HEK293 (cell line): ENCODE measurements at regions of chr17 and their contacts with region 1.

Region 1: DNA sequence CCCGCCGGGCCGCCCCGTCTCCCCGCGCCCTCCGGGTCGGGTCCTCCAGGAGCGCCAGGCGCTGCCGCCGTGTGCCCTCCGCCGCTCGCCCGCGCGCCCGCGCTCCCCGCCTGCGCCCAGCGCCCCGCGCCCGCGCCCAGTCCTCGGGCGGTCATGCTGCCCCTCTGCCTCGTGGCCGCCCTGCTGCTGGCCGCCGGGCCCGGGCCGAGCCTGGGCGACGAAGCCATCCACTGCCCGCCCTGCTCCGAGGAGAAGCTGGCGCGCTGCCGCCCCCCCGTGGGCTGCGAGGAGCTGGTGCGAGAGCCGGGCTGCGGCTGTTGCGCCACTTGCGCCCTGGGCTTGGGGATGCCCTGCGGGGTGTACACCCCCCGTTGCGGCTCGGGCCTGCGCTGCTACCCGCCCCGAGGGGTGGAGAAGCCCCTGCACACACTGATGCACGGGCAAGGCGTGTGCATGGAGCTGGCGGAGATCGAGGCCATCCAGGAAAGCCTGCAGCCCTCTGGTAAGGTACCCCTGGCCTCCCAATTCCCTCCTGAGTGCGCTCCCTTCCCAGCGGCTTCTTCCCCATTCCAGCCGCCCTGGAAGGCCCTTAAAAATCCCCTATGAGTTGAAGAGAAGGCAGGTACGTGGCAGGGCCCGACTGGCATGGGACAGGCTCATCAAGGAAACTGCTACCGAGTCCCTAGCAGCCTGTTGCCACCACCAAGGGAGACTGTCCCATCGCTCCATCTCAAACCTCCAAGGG is 505 bp downstream of the IGFBP4 start:
- H3K4me3 ChIP-seq: peak overlapping the region; percentile 16
- H3K27ac ChIP-seq: peak overlapping the region; percentile 46; the same call in 1 of the 2 replicates
- H3K4me1 ChIP-seq: no peaks in the 10 kb centered on the region; the same call in 1 of the 2 replicates
- CTCF ChIP-seq: peak; percentile 76

Region 2: DNA sequence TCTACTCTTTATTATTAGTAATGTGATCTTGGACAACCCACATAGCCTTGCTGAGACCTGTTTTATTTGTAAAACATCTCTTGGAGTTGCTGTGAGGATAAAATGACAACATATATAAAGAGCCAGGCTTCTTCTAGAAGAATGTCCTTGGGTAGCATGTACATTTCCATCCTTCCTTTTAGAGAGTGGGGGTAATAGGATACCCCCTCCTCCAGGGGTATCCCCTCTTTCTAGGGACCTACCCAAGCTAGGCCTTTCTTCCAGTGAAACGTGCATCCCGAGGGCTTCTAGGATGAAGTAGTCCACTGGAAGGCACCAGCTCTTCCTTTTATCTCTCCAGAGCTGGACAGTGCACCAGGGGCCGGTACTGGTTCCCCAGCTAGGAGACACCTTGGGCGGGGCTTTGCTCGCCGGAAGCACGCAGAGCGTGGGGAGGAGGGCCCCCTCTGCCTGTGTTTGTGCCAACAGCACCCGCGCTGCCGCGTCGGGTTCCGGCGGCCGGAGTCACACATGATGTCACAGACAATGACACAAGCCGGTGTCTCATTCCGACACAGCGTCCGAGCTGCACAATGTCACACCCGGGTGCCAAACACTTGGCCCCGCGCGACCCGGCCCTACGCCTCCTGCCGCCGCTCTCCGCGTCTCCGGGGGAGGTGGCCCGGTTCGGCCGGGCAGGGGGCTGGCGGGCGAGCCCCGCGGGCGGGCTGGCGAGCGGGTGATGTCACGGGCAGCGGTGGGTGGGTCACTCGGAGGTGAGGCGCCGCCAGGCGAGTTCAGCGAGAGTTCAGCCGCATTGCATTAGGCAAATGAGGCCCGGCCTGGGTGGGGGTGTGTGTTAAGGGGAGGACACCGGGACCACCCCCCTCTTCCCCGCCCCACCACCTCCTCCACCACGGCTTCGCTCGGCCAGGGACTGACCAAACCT is 102.6 kb before region 1 on chr17:
- CTCF ChIA-PET with region 1: no interaction called
- POLR2A ChIA-PET with region 1: no interaction called
- H3K4me3 ChIP-seq: peak overlapping the region; percentile 69
- H3K27ac ChIP-seq: peak overlapping the region; percentile 77
- H3K4me1 ChIP-seq: peaks cover 28% of the 10 kb centered on the region
- CTCF ChIP-seq: peak; percentile 52; the same call in 1 of the 2 replicates

Region 3: GRCh38 chr17:40378966-40379365 is 64.8 kb before region 1 on chr17:
- CTCF ChIA-PET with region 1: no interaction called
- POLR2A ChIA-PET with region 1: no interaction called
- H3K4me3 ChIP-seq: no peak overlapping the region
- H3K27ac ChIP-seq: no peak overlapping the region
- H3K4me1 ChIP-seq: no peaks in the 10 kb centered on the region
- CTCF ChIP-seq: no peak

Region 4: GRCh38 chr17:40457964-40458791 is 14.4 kb after region 1 on chr17:
- CTCF ChIA-PET with region 1: interaction called, 11 read pairs
- POLR2A ChIA-PET with region 1: no interaction called
- H3K4me3 ChIP-seq: no peak overlapping the region
- H3K27ac ChIP-seq: no peak overlapping the region
- H3K4me1 ChIP-seq: peaks cover 8% of the 10 kb centered on the region; the same call in 1 of the 2 replicates
- CTCF ChIP-seq: no peak